AG04449 (cell line): ENCODE measurements at regions of chr11 and their contacts with region 1.

Region 1: GRCh38 chr11:75547580-75548058 is 14.4 kb upstream of the SERPINH1 start:
- DNase-seq: no peak
- H3K4me3 ChIP-seq: no peak overlapping the region
- CTCF ChIP-seq: peak; percentile 72

Region 2: DNA sequence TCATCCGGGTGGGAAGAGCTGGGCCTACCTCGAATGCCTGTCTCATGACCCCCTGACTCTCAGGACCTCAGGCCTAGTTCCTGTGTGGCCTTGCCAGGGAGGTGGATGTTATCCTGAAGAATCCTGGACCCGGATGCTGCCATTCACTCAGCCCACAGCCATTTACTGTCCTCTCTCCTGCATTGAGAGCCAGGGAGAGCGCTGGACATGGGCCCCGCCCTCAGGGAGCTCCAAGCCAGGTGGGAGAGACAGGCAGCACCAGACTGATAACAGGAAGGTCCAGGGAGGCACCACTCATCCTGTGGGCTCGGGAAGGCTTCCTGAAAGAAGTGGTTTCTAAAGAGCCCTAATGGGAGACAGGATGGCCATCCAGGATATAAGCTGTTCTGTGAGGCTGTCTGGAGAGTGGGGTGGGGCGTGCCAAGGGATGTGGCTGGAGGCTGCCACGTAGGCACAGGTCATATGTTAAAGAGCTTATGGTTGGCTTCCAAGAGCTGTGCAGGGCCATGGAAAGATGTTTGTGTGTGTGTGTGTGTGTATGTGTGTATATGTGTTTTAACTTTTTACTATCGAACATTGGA is 23.0 kb after region 1 on chr11:
- CTCF ChIA-PET with region 1: interaction called, 57 read pairs
- POLR2A ChIA-PET with region 1: interaction called, 168 read pairs
- DNase-seq: no peak
- H3K4me3 ChIP-seq: no peak overlapping the region
- CTCF ChIP-seq: no peak

Region 3: GRCh38 chr11:75577207-75577606 is 29.6 kb after region 1 on chr11:
- CTCF ChIA-PET with region 1: interaction called, 57 read pairs
- POLR2A ChIA-PET with region 1: interaction called, 79 read pairs
- DNase-seq: no peak
- H3K4me3 ChIP-seq: no peak overlapping the region
- CTCF ChIP-seq: peak; percentile 68